ENCODE measurements at regions of chr10 and their contacts with region 1.

Region 1: DNA sequence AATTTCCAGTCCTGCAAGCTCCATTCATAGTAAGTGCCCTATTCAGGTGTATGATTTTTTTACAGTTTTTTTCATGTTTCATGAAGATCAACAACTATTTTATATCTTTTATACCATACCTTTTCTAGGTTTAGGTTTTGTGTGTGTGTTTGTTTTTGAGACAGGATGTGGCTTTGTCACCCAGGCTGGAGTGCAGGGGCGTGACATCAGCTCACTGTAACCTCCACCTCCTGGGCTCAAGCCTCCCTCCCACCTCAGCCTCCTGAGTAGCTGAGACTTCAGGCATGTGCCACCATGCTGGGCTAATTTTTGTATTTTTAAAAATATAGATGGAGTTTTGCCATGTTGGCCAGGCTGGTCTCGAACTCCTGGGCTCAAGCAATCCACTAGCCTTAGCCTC is 35.0 kb downstream of the ARMH3 start:
- DNase-seq: no peak
- H3K4me3 ChIP-seq: no peak overlapping the region
- H3K4me3 Mint-ChIP-seq: no peak overlapping the region
- H3K27ac ChIP-seq: no peak overlapping the region
- H3K27ac Mint-ChIP-seq: peak overlapping the region in 2 of 8 donors; percentile 60 to 68
- H3K4me1 ChIP-seq: no peaks in the 10 kb centered on the region
- H3K4me1 Mint-ChIP-seq: peaks cover 0 to 4% (median 3%) of the 10 kb centered on the region in 3 donors
- H3K27me3 ChIP-seq: no peaks in the 10 kb centered on the region
- H3K27me3 Mint-ChIP-seq: no peaks in the 10 kb centered on the region

Region 2: DNA sequence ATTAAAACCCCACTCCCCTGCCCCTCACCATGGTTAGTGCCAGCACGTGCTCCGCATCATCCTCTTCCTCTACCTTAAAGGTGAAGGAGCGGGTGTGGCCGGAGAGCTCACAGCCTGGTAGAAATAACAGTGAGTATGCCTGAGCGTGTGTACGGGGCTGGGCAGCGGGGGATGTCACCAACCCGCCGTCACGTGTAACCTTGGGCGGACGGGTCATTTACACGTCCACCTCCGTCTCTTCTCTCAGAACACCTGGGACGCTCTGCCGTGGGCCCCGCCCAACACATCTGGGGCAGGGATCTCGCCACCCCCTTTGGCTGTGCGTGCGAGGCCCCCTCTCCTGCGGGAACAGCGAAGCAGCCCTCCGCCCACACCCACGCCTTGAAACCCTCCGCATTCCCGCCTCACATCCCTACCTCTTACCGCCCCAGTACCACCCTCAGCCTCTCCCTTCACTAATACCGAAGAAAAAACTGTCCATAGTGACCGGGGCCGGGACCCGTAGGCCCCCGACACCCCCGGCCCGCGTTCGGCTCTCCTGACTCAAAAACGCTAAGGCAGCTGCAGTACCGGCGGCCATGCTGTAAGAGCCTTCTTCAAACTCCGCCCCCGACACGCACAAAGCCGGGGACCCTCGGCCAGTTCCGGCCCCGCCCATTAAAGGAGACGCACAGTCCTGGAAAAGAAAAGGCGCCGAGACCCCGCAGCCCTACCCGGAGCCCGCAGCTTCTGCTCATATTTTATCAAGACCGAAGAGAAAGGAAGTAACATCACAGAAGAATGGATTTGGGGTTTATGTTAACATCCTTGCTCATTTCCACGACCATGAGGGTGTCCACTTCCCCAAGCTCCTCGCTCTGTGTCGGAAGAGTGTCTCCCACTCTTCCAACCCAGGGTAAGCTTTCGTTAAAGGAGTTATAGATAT is 237.9 kb before region 1 on chr10 and contains the start of gene NPM3:
- CTCF ChIA-PET with region 1: no interaction called
- POLR2A ChIA-PET with region 1: no interaction called
- DNase-seq: peak; percentile 66 to 85 (median 74)
- H3K4me3 ChIP-seq: peak within 1 kb of the TSS; percentile 67
- H3K4me3 Mint-ChIP-seq: peak within 1 kb of the TSS; percentile 91 to 100 (median 99)
- H3K27ac ChIP-seq: peak within 1 kb of the TSS; percentile 52
- H3K27ac Mint-ChIP-seq: peak within 1 kb of the TSS; percentile 77 to 98 (median 96)
- H3K4me1 ChIP-seq: peaks cover 54% of the 10 kb centered on the region
- H3K4me1 Mint-ChIP-seq: peaks cover 53 to 82% (median 69%) of the 10 kb centered on the region in 3 donors
- H3K27me3 ChIP-seq: peaks cover 5% of the 10 kb centered on the region
- H3K27me3 Mint-ChIP-seq: peaks cover 6 to 11% of the 10 kb centered on the region in 2 donors
- total RNA-seq, gene NPM3: 209 to 217 TPM

Region 3: GRCh38 chr10:102009801-102010425 is 11.0 kb before region 1 on chr10:
- CTCF ChIA-PET with region 1: interaction called, 21 read pairs
- POLR2A ChIA-PET with region 1: no interaction called
- DNase-seq: peak; percentile 1 to 50 (median 41)
- H3K4me3 ChIP-seq: no peak overlapping the region
- H3K4me3 Mint-ChIP-seq: no peak overlapping the region
- H3K27ac ChIP-seq: no peak overlapping the region
- H3K27ac Mint-ChIP-seq: peak overlapping the region in 2 of 8 donors; percentile 66 to 67
- H3K4me1 ChIP-seq: no peaks in the 10 kb centered on the region
- H3K4me1 Mint-ChIP-seq: peaks cover 0 to 3% (median 0%) of the 10 kb centered on the region in 3 donors
- H3K27me3 ChIP-seq: no peaks in the 10 kb centered on the region
- H3K27me3 Mint-ChIP-seq: no peaks in the 10 kb centered on the region